Esophagus muscularis mucosa (tissue), 4 donors: ENCODE measurements at regions of chr13 and their contacts with region 1.

Region 1: DNA sequence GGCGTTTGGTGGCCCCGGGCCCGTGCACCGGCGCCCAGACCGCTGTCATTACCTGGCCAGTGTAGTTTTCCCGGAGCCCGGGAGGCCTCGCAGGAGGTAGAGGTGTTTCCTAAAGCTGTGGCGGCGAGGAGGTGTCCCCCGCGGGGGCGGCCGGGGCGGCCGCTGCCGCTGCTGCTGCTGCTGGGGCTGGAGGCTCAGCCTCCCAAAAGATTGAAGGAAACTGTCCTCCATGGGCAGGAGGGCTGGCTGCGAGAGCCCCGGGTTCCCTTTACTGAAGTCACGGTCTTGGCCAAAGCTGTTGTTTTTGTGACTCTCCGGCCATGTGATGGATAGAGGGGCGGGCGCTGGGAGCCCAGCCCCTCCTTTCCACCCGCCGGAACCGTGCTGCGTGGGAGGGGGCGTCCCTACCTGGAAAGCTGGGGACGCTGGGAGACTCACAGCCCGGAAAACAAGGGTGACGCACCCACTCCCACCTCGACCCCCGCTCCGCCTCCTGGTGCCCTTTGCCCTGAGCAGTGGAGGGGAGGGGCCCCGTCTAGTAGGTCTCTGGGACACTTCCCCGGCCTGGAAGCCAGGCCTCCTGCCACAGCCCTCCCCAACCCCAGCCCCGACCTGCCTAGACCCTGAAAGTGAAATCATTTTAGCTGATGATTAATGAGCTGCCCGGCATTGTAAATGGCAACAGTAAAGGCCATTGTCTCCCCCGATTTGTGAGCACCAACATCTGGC is at the start of gene N4BP2L1:
- DNase-seq: peak; percentile 94
- H3K4me3 ChIP-seq: peak within 1 kb of the TSS; percentile 87 to 92 (median 90)
- H3K27ac ChIP-seq: peak within 1 kb of the TSS; percentile 89 to 92 (median 91)
- H3K4me1 ChIP-seq: peaks cover 18 to 41% (median 29%) of the 10 kb centered on the region in 4 donors
- H3K27me3 ChIP-seq: no peaks in the 10 kb centered on the region
- CTCF ChIP-seq: no peak
- EP300 ChIP-seq: no peak
- POLR2A ChIP-seq: peak; percentile 75
- total RNA-seq, gene N4BP2L1: 9.0 to 19.6 (median 11.6) TPM

Region 2: GRCh38 chr13:32315238-32316027 is 112.6 kb before region 1 on chr13 and contains the starts of genes BRCA2 and ZAR1L:
- intact Hi-C with region 1: no loop called
- DNase-seq: peak; percentile 96
- H3K4me3 ChIP-seq: peak within 1 kb of the TSS; percentile 68 to 78 (median 70)
- H3K27ac ChIP-seq: peak within 1 kb of the TSS; percentile 91 to 96 (median 92)
- H3K4me1 ChIP-seq: peaks cover 6 to 18% (median 14%) of the 10 kb centered on the region in 4 donors
- H3K27me3 ChIP-seq: no peaks in the 10 kb centered on the region
- CTCF ChIP-seq: no peak
- EP300 ChIP-seq: no peak
- POLR2A ChIP-seq: peak; percentile 29
- total RNA-seq, gene BRCA2: 0.32 to 0.83 (median 0.38) TPM
- total RNA-seq, gene ZAR1L: not detected

Region 3: GRCh38 chr13:32538621-32539246 is 110.7 kb after region 1 on chr13 and contains the start of gene N4BP2L2:
- intact Hi-C with region 1: loop called (anchors 5 kb)
- DNase-seq: peak; percentile 99
- H3K4me3 ChIP-seq: peak within 1 kb of the TSS; percentile 72 to 84 (median 82)
- H3K27ac ChIP-seq: peak within 1 kb of the TSS; percentile 89 to 96 (median 92)
- H3K4me1 ChIP-seq: peaks cover 38 to 44% (median 42%) of the 10 kb centered on the region in 4 donors
- H3K27me3 ChIP-seq: no peaks in the 10 kb centered on the region
- CTCF ChIP-seq: peak; percentile 28 to 39 (median 32)
- EP300 ChIP-seq: no peak
- POLR2A ChIP-seq: no peak
- total RNA-seq, gene N4BP2L2: 81.2 to 198 (median 106) TPM